ENCODE measurements at regions of chr20 and their contacts with region 1.

Region 1: GRCh38 chr20:41287327-41287726 is 30.2 kb downstream of the ZHX3 start:
- DNase-seq: no peak
- ATAC-seq: no peak
- H3K4me3 ChIP-seq: no peak overlapping the region
- H3K4me3 Mint-ChIP-seq: no peak overlapping the region
- H3K27ac ChIP-seq: no peak overlapping the region
- H3K27ac Mint-ChIP-seq: no peak overlapping the region
- H3K4me1 ChIP-seq: no peaks in the 10 kb centered on the region
- H3K4me1 Mint-ChIP-seq: no peaks in the 10 kb centered on the region
- H3K27me3 ChIP-seq: no peaks in the 10 kb centered on the region
- H3K27me3 Mint-ChIP-seq: no peaks in the 10 kb centered on the region
- CTCF ChIP-seq: no peak

Region 2: DNA sequence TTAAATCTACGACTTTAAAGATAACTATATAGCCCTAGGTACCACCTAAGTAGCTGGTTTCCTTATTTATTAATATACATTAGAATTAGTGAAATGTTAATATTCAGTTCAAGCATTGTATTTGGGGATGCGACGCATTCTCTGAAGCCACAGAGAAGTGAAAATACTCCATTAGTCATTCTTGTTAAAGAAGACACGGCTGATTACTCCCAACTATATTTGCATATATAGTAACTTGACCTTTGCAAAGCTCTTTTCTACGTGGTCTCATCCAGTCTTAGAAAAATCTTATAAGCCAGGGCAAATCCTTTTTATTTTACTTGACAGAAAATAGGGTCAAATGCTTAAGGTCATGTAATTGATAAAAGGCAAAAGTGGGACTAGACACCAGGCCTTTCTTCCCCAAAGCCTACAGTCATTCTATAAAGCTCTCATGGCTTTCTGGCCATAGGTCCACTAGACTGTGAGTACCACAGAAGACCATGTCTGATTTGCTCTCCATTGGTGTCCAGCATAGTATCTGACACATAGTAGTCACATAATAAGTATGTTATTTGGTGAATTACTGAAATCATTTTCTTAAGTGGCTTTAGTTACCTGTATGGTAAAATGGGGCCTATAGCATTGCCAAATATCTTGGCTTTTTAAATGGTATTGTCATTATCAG is 18.9 kb after region 1 on chr20:
- intact Hi-C with region 1: loop called (anchors 1 kb)
- DNase-seq: no peak
- ATAC-seq: no peak
- H3K4me3 ChIP-seq: no peak overlapping the region
- H3K4me3 Mint-ChIP-seq: no peak overlapping the region
- H3K27ac ChIP-seq: no peak overlapping the region
- H3K27ac Mint-ChIP-seq: no peak overlapping the region
- H3K4me1 ChIP-seq: no peaks in the 10 kb centered on the region
- H3K4me1 Mint-ChIP-seq: peaks cover 5 to 15% of the 10 kb centered on the region in 2 donors
- H3K27me3 ChIP-seq: no peaks in the 10 kb centered on the region
- H3K27me3 Mint-ChIP-seq: no peaks in the 10 kb centered on the region
- CTCF ChIP-seq: no peak

Region 3: DNA sequence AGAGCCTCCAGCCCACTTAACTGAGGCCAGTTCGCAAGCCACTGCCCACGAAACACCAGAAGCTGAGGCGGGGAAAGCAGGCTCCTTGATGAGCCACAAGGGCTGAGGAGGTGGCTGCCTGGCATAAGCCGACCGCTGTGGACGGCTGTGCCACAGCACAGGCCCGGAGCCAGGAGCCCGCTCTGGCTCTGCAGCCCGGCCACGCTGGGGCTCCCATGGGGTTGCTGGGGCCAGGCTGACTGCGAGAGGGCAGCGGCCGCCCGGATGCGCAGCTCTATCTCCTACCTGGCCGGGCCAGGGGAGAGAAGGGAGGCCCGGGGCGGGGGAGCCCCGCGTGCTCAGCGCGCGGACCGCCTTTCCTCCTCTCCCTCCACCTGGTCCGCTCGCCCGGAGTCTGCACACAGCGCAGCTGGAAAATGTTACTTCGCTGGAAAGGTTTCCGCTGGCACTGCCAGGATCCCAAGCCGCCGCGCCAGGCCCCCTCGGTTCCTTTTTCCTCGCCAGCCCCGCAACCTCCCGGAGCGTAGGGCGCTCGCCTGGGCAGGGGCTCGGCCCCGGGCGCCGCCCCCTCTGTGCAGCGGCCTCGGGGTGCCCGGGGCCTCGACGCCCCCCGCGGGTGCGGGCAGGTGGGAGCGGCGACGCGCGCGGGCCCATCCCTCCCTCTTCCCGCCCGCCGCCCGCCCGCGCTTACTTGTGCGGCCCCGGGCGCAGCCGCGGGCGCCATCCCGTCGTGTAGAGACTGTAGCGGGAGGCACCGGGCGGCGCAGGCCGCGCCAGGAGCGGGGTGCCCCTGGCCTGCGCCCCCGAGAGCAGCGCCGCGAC is 78.7 kb after region 1 on chr20:
- intact Hi-C with region 1: no loop called
- DNase-seq: no peak
- ATAC-seq: no peak
- H3K4me3 ChIP-seq: no peak overlapping the region
- H3K4me3 Mint-ChIP-seq: no peak overlapping the region
- H3K27ac ChIP-seq: no peak overlapping the region
- H3K27ac Mint-ChIP-seq: no peak overlapping the region
- H3K4me1 ChIP-seq: no peaks in the 10 kb centered on the region
- H3K4me1 Mint-ChIP-seq: peaks cover 0 to 5% of the 10 kb centered on the region in 2 donors
- H3K27me3 ChIP-seq: peaks cover 5% of the 10 kb centered on the region
- H3K27me3 Mint-ChIP-seq: peaks cover 34 to 41% of the 10 kb centered on the region in 2 donors
- CTCF ChIP-seq: no peak

Region 4: DNA sequence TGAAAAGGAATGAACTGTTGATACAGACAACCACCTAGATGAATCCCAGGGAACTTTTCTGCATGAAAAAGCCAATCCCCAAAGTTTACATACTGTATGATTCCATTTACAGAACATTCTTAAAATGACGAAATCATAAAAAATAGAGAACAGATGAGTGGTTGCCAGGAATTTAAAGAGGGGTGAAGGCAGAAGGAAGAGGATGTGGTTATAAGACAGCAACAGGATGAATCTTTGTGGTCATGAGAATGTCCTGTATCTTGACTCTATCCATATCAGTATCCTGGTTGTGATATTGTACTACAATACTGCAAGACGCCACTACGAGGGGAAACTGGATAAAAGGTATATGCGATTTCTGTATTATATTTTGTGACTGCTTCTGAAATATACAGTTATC is 149.4 kb after region 1 on chr20:
- intact Hi-C with region 1: no loop called
- DNase-seq: peak in 1 of 2 donors; percentile 5
- ATAC-seq: no peak
- H3K4me3 ChIP-seq: no peak overlapping the region
- H3K4me3 Mint-ChIP-seq: no peak overlapping the region
- H3K27ac ChIP-seq: no peak overlapping the region
- H3K27ac Mint-ChIP-seq: no peak overlapping the region
- H3K4me1 ChIP-seq: no peaks in the 10 kb centered on the region
- H3K4me1 Mint-ChIP-seq: peaks cover 6 to 19% of the 10 kb centered on the region in 2 donors
- H3K27me3 ChIP-seq: no peaks in the 10 kb centered on the region
- H3K27me3 Mint-ChIP-seq: no peaks in the 10 kb centered on the region
- CTCF ChIP-seq: no peak

Measured in natural killer cell (primary cell).